ENCODE measurements at regions of chr1 and their contacts with region 1.

Region 1: GRCh38 chr1:181142096-181142958 is 53.8 kb downstream of the IER5 start:
- DNase-seq: peak; percentile 90 to 94 (median 94)
- ATAC-seq: peak; percentile 98
- H3K4me3 ChIP-seq: no peak overlapping the region
- H3K27ac ChIP-seq: peak overlapping the region; percentile 36; the same call in 1 of the 3 replicates
- H3K4me1 ChIP-seq: peaks cover 20 to 28% of the 10 kb centered on the region in 2 experiments
- H3K27me3 ChIP-seq: no peaks in the 10 kb centered on the region
- CTCF ChIP-seq: peak; percentile 98 to 100 (median 99)
- EP300 ChIP-seq: peak; percentile 46; the same call in 1 of the 2 replicates
- POLR2A ChIP-seq: no peak
- RAD21 ChIP-seq: peak; percentile 100

Region 2: GRCh38 chr1:180502360-180503273 is 639.7 kb before region 1 on chr1 and contains the start of gene ACBD6:
- CTCF ChIA-PET with region 1: no interaction called
- POLR2A ChIA-PET with region 1: no interaction called
- in situ Hi-C with region 1: loop called (anchors 5 kb)
- intact Hi-C with region 1: no loop called
- DNase-seq: peak; percentile 86 to 95 (median 90)
- ATAC-seq: peak; percentile 93
- H3K4me3 ChIP-seq: peak within 1 kb of the TSS; percentile 57
- H3K27ac ChIP-seq: peak within 1 kb of the TSS; percentile 85
- H3K4me1 ChIP-seq: peaks cover 10 to 19% of the 10 kb centered on the region in 2 experiments; a peak in 4 of 5 replicates
- H3K27me3 ChIP-seq: no peaks in the 10 kb centered on the region
- CTCF ChIP-seq: peak; percentile 36 to 40 (median 39); a peak in 4 of 6 replicates
- EP300 ChIP-seq: peak; percentile 70
- POLR2A ChIP-seq: peak; percentile 95
- RAD21 ChIP-seq: 0 out of 4 replicates have a peak, but pooled peaks of 1 of the 2 experiments have one; percentile 9
- polyA plus RNA-seq, gene ACBD6: 16.9 to 27.1 TPM

Region 3: DNA sequence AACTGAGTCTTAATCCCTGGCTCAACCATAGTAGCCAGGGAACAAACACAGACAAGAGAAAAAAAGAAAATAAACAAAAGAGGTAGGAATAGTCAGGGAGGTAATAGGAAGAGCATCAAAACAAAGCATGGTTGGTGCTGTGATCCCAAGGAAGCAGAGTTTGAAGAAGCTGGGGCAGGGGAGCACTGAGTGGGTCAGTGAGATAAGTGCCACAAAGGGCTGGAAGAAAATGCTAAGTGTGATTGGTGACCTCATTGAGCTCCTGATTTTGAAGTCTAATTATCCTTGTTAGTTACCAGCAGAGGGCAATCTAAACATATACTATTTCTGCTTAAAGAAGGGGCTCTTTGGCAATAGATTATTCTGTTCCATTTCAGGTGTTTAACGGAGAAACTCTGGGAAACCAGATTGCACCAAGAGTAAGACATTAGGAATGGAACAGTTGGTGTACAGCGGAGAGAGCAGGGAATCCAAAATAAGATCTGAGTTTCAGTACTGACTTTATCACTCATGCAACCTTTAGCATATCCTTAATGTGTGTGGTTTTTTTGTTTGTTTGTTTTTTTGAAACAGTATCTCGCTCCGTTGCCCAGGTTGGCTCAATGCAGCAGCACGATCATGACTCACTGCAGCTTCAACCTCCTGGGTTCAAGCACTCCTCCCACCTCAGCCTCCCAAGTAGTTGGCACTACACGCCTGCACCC is 260.4 kb before region 1 on chr1:
- CTCF ChIA-PET with region 1: interaction called, 11 read pairs
- POLR2A ChIA-PET with region 1: no interaction called
- in situ Hi-C with region 1: loop called (anchors 5 kb)
- intact Hi-C with region 1: loop called (anchors 1 kb)
- DNase-seq: peak; percentile 52 to 76 (median 68)
- ATAC-seq: peak; percentile 97
- H3K4me3 ChIP-seq: no peak overlapping the region
- H3K27ac ChIP-seq: no peak overlapping the region
- H3K4me1 ChIP-seq: peaks cover 0 to 3% of the 10 kb centered on the region in 2 experiments; a peak in 1 of 5 replicates
- H3K27me3 ChIP-seq: no peaks in the 10 kb centered on the region
- CTCF ChIP-seq: peak; percentile 45 to 80 (median 67); a peak in 5 of 6 replicates
- EP300 ChIP-seq: no peak
- POLR2A ChIP-seq: no peak
- RAD21 ChIP-seq: peak; percentile 85 to 91

Region 4: GRCh38 chr1:181050922-181051321 is 91.4 kb before region 1 on chr1:
- CTCF ChIA-PET with region 1: no interaction called
- POLR2A ChIA-PET with region 1: no interaction called
- in situ Hi-C with region 1: no loop called
- intact Hi-C with region 1: no loop called
- DNase-seq: no peak
- ATAC-seq: no peak
- H3K4me3 ChIP-seq: no peak overlapping the region
- H3K27ac ChIP-seq: no peak overlapping the region
- H3K4me1 ChIP-seq: no peaks in the 10 kb centered on the region
- H3K27me3 ChIP-seq: no peaks in the 10 kb centered on the region
- CTCF ChIP-seq: no peak
- EP300 ChIP-seq: no peak
- POLR2A ChIP-seq: no peak
- RAD21 ChIP-seq: no peak